ENCODE measurements at regions of chr17 and their contacts with region 1.

Region 1: DNA sequence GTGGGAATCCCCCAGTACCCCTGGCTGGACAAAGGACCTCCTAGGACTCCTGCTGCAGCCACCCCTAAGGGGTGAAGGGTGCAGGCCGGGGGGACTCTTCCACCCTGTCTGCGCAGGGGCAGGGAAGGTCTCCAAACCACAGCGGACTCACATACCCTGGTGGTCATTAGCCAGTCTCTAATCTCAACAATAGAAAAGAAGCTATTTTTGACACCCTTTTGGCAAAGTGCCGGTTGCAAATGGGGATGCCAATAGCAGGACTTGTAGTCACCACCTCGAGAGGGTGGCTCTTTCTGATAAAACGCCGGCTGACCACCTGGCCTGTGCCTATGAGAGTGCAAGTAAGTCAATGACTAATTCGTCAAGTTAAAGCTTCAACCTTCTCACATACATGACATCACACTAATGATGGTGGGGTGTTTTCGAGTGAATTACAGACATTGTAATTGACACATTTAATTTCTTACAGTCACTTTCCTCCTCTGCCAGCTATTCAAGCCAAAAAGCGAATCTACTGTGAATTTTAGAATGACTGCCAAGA is 23.1 kb upstream of the DNAH17 start:
- DNase-seq: no peak
- H3K4me3 ChIP-seq: no peak overlapping the region
- H3K27ac ChIP-seq: no peak overlapping the region
- H3K4me1 ChIP-seq: peaks cover 0 to 5% of the 10 kb centered on the region in 2 experiments; a peak in 1 of 4 replicates
- H3K27me3 ChIP-seq: no peaks in the 10 kb centered on the region
- CTCF ChIP-seq: no peak
- EP300 ChIP-seq: no peak
- RAD21 ChIP-seq: no peak

Region 2: DNA sequence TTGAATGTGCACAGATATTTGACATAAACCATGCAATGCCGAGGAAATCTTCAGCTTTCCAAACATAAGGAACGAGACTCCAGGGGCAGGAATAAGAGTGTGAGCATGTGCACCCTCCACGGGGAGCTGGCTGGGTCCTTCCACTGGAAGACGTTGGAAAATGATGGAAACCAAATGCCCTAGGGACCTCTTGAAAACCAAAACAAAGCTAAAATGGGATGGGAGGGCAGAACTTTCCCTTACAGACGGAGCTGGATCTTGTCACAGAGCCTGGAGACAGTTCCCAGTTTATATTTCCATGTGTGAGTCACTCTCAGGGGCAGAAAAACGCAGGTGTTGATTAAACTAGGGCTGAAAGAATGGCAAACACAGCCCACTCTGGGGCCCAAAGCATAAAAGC is 11.4 kb after region 1 on chr17:
- CTCF ChIA-PET with region 1: interaction called, 18 read pairs
- POLR2A ChIA-PET with region 1: no interaction called
- DNase-seq: peak; percentile 12
- H3K4me3 ChIP-seq: no peak overlapping the region
- H3K27ac ChIP-seq: no peak overlapping the region
- H3K4me1 ChIP-seq: no peaks in the 10 kb centered on the region
- H3K27me3 ChIP-seq: no peaks in the 10 kb centered on the region
- CTCF ChIP-seq: no peak
- EP300 ChIP-seq: no peak
- RAD21 ChIP-seq: no peak

Measured in SK-N-SH (cell line).